Sigmoid colon (tissue), 7 donors: ENCODE measurements at regions of chr13 and their contacts with region 1.

Region 1: GRCh38 chr13:36282818-36283445 is 14.7 kb downstream of the CCDC169 start:
- DNase-seq: no peak
- H3K4me3 ChIP-seq: no peak overlapping the region
- H3K27ac ChIP-seq: no peak overlapping the region
- H3K4me1 ChIP-seq: peaks cover 0 to 22% (median 14%) of the 10 kb centered on the region in 4 donors
- H3K27me3 ChIP-seq: no peaks in the 10 kb centered on the region
- CTCF ChIP-seq: peak; percentile 60 to 86 (median 70)
- EP300 ChIP-seq: no peak
- POLR2A ChIP-seq: no peak

Region 2: GRCh38 chr13:36313047-36313969 is 30.4 kb after region 1 on chr13:
- intact Hi-C with region 1: no loop called
- DNase-seq: no peak
- H3K4me3 ChIP-seq: no peak overlapping the region
- H3K27ac ChIP-seq: no peak overlapping the region
- H3K4me1 ChIP-seq: no peaks in the 10 kb centered on the region
- H3K27me3 ChIP-seq: peaks cover 0 to 3% (median 0%) of the 10 kb centered on the region in 3 donors
- CTCF ChIP-seq: no peak
- EP300 ChIP-seq: no peak
- POLR2A ChIP-seq: no peak

Region 3: DNA sequence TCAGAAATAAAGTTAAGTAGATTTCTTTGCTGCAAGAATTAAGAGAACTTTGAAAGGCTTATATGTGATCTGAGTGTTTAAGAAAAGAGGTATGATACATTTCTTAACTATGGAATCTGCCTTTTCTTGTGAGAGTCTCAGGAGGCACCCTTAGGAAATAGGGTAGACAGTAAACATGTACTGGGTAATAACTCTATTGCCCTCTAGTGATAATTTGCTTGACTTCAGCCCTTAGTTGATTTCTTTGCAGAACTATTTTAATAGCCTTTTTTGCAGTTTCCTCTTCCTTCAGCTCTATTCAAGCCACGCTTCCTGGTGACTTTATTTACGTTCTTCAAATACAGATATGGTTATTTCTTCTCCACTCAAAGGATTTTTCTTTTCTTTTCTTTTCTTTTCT is 112.3 kb after region 1 on chr13:
- intact Hi-C with region 1: loop called (anchors 5 kb)
- DNase-seq: no peak
- H3K4me3 ChIP-seq: no peak overlapping the region
- H3K27ac ChIP-seq: no peak overlapping the region
- H3K4me1 ChIP-seq: no peaks in the 10 kb centered on the region
- H3K27me3 ChIP-seq: no peaks in the 10 kb centered on the region
- CTCF ChIP-seq: peak in 2 of 4 experiments; percentile 24 to 47
- EP300 ChIP-seq: no peak
- POLR2A ChIP-seq: no peak

Region 4: GRCh38 chr13:36513266-36513665 is 230.3 kb after region 1 on chr13:
- intact Hi-C with region 1: no loop called
- DNase-seq: no peak
- H3K4me3 ChIP-seq: no peak overlapping the region
- H3K27ac ChIP-seq: no peak overlapping the region
- H3K4me1 ChIP-seq: no peaks in the 10 kb centered on the region
- H3K27me3 ChIP-seq: no peaks in the 10 kb centered on the region
- CTCF ChIP-seq: no peak
- EP300 ChIP-seq: no peak
- POLR2A ChIP-seq: no peak

Region 5: DNA sequence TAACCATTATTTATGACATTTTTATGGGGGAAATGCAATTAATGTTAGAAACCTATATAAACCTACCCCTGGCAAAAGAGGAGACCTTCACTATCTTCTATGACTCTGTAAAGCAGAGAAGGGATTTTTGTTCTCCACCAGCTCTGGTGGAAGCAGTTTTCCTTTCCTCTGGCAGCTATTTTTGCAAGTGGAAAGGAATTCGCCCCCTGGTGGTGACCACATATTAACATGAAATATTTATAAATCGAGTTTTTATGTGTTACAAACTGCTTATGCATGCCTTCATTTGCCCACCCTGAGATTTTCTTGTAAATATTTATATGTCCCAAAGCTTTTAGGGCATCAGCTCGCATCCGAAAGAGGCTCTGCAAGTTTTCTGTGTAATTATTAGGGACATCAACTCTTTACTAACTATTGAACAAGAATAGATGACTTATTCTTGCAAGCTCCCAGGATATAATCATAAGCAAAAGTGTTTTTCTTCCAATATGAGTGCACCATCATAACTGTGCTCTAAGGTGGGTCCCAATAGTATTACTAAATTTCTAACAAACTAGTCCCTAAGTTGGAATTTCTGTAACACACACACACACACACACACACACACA is 453.3 kb after region 1 on chr13:
- intact Hi-C with region 1: loop called (anchors 5 kb)
- DNase-seq: peak; percentile 69
- H3K4me3 ChIP-seq: no peak overlapping the region
- H3K27ac ChIP-seq: no peak overlapping the region
- H3K4me1 ChIP-seq: no peaks in the 10 kb centered on the region
- H3K27me3 ChIP-seq: no peaks in the 10 kb centered on the region
- CTCF ChIP-seq: peak; percentile 32 to 69 (median 59)
- EP300 ChIP-seq: no peak
- POLR2A ChIP-seq: no peak